CD8-positive, alpha-beta T cell (primary cell): ENCODE measurements at regions of chr16 and their contacts with region 1.

Region 1: DNA sequence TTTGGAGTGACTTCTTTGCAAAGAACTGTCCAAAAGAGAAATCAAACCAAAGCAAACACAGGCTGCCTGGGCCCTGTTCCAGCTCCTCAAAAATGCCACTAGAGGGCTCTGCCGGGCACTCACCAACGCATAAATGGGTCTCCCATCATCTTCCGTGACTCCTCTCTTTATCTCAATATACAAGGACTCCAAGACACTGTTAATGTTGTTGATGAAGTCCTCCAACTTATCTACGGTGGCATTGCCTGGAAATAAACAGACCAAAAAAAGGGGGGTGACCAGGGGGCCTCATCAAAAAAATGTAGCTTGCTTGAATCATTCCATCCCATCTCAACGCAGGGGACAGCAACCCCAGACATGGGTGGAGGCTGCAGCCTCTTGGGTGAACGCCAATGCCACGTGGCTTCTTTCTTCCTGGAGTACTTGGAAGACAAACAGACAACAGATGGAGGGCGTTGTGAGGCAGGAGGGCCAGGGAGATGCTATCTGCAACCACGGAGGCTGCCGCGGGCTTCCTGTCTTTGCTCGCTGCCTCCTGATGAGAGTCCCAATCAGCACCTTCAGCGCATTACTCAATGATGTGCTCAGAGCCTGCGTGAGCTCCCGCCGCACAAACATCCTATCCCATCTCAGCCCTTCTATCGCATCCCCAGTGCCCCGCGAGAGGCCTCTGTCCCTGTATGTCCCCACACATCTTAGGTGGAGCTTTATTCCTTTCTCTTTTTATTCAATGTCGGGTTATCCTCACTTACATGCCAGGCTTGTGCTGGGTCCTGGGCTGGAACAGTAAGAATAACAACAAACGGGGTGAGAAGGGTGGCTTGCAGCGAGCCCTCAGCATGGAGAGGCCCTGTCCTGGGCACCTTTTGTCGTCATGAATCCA is 32.0 kb downstream of the KDM8 start:
- DNase-seq: peak; percentile 78 to 98 (median 93)
- ATAC-seq: peak; percentile 64
- H3K4me3 ChIP-seq: peak overlapping the region; percentile 14 to 30
- H3K4me3 Mint-ChIP-seq: peak overlapping the region; percentile 78
- H3K27ac ChIP-seq: peak overlapping the region; percentile 90 to 97
- H3K27ac Mint-ChIP-seq: peak overlapping the region; percentile 98
- H3K4me1 ChIP-seq: peaks cover 84% of the 10 kb centered on the region
- H3K4me1 Mint-ChIP-seq: peaks cover 92% of the 10 kb centered on the region
- H3K27me3 ChIP-seq: no peaks in the 10 kb centered on the region
- H3K27me3 Mint-ChIP-seq: no peaks in the 10 kb centered on the region
- CTCF ChIP-seq: peak; percentile 76

Region 2: DNA sequence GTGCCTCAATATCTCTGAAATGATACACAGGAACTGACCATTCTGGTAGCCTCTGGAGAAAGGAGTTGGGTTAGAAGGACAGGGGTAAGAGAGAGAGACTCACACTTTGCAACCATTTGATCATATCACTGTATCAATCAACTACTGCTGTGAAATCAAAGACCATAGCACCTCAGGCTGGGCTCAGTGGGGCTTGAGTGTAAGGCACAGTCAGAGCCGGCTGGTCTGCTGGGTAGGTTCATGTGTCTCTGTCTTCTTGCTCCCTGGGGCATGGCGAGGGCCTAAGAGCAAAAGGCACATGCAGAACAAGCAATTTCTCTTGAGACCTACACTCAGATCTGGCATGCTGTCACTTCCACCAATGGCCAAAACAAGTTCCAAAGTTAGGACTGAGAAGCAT is 215.3 kb before region 1 on chr16:
- CTCF ChIA-PET with region 1: no interaction called
- POLR2A ChIA-PET with region 1: no interaction called
- intact Hi-C with region 1: no loop called
- DNase-seq: no peak
- ATAC-seq: no peak
- H3K4me3 ChIP-seq: no peak overlapping the region
- H3K4me3 Mint-ChIP-seq: no peak overlapping the region
- H3K27ac ChIP-seq: no peak overlapping the region
- H3K27ac Mint-ChIP-seq: no peak overlapping the region
- H3K4me1 ChIP-seq: no peaks in the 10 kb centered on the region
- H3K4me1 Mint-ChIP-seq: no peaks in the 10 kb centered on the region
- H3K27me3 ChIP-seq: no peaks in the 10 kb centered on the region
- H3K27me3 Mint-ChIP-seq: peaks cover 15% of the 10 kb centered on the region
- CTCF ChIP-seq: no peak

Region 3: GRCh38 chr16:27097800-27098230 is 137.5 kb before region 1 on chr16:
- CTCF ChIA-PET with region 1: no interaction called
- POLR2A ChIA-PET with region 1: no interaction called
- intact Hi-C with region 1: no loop called
- DNase-seq: no peak
- ATAC-seq: no peak
- H3K4me3 ChIP-seq: no peak overlapping the region
- H3K4me3 Mint-ChIP-seq: no peak overlapping the region
- H3K27ac ChIP-seq: no peak overlapping the region
- H3K27ac Mint-ChIP-seq: no peak overlapping the region
- H3K4me1 ChIP-seq: no peaks in the 10 kb centered on the region
- H3K4me1 Mint-ChIP-seq: no peaks in the 10 kb centered on the region
- H3K27me3 ChIP-seq: no peaks in the 10 kb centered on the region
- H3K27me3 Mint-ChIP-seq: peaks cover 26% of the 10 kb centered on the region
- CTCF ChIP-seq: no peak

Region 4: GRCh38 chr16:27179500-27180072 is 55.7 kb before region 1 on chr16:
- CTCF ChIA-PET with region 1: interaction called, 64 read pairs
- POLR2A ChIA-PET with region 1: interaction called, 12 read pairs
- intact Hi-C with region 1: loop called (anchors 1 to 2 kb)
- DNase-seq: peak; percentile 78 to 94 (median 88)
- ATAC-seq: peak; percentile 100
- H3K4me3 ChIP-seq: no peak overlapping the region
- H3K4me3 Mint-ChIP-seq: peak overlapping the region; percentile 9
- H3K27ac ChIP-seq: no peak overlapping the region
- H3K27ac Mint-ChIP-seq: peak overlapping the region; percentile 28
- H3K4me1 ChIP-seq: peaks cover 22% of the 10 kb centered on the region
- H3K4me1 Mint-ChIP-seq: peaks cover 24% of the 10 kb centered on the region
- H3K27me3 ChIP-seq: no peaks in the 10 kb centered on the region
- H3K27me3 Mint-ChIP-seq: no peaks in the 10 kb centered on the region
- CTCF ChIP-seq: peak; percentile 92

Region 5: GRCh38 chr16:27222249-27223225 is 12.8 kb before region 1 on chr16:
- CTCF ChIA-PET with region 1: interaction called, 11 read pairs
- POLR2A ChIA-PET with region 1: interaction called, 6 read pairs
- intact Hi-C with region 1: no loop called
- DNase-seq: no peak
- ATAC-seq: no peak
- H3K4me3 ChIP-seq: no peak overlapping the region
- H3K4me3 Mint-ChIP-seq: no peak overlapping the region
- H3K27ac ChIP-seq: no peak overlapping the region
- H3K27ac Mint-ChIP-seq: peak overlapping the region; percentile 62
- H3K4me1 ChIP-seq: peaks cover 9% of the 10 kb centered on the region
- H3K4me1 Mint-ChIP-seq: peaks cover 16% of the 10 kb centered on the region
- H3K27me3 ChIP-seq: no peaks in the 10 kb centered on the region
- H3K27me3 Mint-ChIP-seq: no peaks in the 10 kb centered on the region
- CTCF ChIP-seq: no peak

Region 6: GRCh38 chr16:27313422-27314160 is 78.3 kb after region 1 on chr16 and contains the start of gene IL4R:
- CTCF ChIA-PET with region 1: interaction called, 57 read pairs
- POLR2A ChIA-PET with region 1: interaction called, 16 read pairs
- intact Hi-C with region 1: loop called (anchors 1 to 2 kb)
- DNase-seq: peak; percentile 19 to 84 (median 64)
- ATAC-seq: peak; percentile 51
- H3K4me3 ChIP-seq: peak within 1 kb of the TSS; percentile 88 to 90
- H3K4me3 Mint-ChIP-seq: peak within 1 kb of the TSS; percentile 94
- H3K27ac ChIP-seq: peak within 1 kb of the TSS; percentile 83 to 87
- H3K27ac Mint-ChIP-seq: peak within 1 kb of the TSS; percentile 98
- H3K4me1 ChIP-seq: peaks cover 43% of the 10 kb centered on the region
- H3K4me1 Mint-ChIP-seq: peaks cover 47% of the 10 kb centered on the region
- H3K27me3 ChIP-seq: no peaks in the 10 kb centered on the region
- H3K27me3 Mint-ChIP-seq: no peaks in the 10 kb centered on the region
- CTCF ChIP-seq: no peak
- total RNA-seq, gene IL4R: 224 to 240 TPM

Region 7: DNA sequence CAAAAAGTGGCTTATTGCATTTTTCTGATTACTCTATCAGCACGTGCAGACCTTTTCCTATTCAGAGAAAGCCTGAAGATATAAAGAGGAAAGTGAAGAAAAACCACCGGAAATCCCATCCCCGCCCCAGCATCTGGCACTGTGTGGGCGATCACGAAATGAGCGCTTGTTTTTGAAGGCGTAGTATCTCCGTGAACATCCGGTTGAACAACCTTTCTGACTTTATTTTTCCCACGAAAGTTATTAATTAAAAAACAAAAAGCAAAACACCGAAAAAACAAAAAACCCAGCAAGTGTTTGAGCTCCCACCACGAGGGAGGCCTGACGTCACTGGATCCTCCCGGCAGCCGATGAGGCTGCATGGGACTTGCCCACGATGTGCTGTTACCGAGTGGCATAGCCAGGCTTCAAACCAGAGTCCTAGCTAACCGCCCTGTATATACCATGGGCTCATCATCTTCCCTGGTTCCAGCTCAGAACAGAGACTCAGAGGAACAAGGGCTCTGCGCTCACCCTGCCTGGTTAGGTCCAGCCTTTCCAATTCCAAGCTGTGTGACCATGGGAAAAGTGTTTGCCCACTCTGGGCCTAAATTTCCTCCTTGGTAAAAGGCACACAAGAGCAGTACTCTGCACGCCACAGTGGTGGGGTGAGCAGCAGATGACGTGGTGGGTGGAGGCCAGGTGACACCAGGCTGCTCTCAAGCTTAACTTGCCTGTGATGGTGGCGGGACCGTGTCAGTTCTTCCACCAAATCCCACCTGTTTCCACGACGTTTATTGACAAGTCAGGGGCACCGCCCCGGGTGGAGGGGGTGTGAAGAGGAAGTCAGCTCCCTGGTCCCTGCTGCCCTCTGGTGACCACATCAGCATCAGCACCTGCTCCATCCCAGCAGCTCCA is 132.4 kb after region 1 on chr16:
- CTCF ChIA-PET with region 1: interaction called, 69 read pairs
- POLR2A ChIA-PET with region 1: interaction called, 68 read pairs
- intact Hi-C with region 1: loop called (anchors 1 kb)
- DNase-seq: peak; percentile 70 to 98 (median 84)
- ATAC-seq: peak; percentile 81
- H3K4me3 ChIP-seq: peak overlapping the region; percentile 1 to 11
- H3K4me3 Mint-ChIP-seq: peak overlapping the region; percentile 26
- H3K27ac ChIP-seq: peak overlapping the region; percentile 93 to 97
- H3K27ac Mint-ChIP-seq: peak overlapping the region; percentile 99
- H3K4me1 ChIP-seq: peaks cover 58% of the 10 kb centered on the region
- H3K4me1 Mint-ChIP-seq: peaks cover 69% of the 10 kb centered on the region
- H3K27me3 ChIP-seq: no peaks in the 10 kb centered on the region
- H3K27me3 Mint-ChIP-seq: no peaks in the 10 kb centered on the region
- CTCF ChIP-seq: peak; percentile 73

Region 8: DNA sequence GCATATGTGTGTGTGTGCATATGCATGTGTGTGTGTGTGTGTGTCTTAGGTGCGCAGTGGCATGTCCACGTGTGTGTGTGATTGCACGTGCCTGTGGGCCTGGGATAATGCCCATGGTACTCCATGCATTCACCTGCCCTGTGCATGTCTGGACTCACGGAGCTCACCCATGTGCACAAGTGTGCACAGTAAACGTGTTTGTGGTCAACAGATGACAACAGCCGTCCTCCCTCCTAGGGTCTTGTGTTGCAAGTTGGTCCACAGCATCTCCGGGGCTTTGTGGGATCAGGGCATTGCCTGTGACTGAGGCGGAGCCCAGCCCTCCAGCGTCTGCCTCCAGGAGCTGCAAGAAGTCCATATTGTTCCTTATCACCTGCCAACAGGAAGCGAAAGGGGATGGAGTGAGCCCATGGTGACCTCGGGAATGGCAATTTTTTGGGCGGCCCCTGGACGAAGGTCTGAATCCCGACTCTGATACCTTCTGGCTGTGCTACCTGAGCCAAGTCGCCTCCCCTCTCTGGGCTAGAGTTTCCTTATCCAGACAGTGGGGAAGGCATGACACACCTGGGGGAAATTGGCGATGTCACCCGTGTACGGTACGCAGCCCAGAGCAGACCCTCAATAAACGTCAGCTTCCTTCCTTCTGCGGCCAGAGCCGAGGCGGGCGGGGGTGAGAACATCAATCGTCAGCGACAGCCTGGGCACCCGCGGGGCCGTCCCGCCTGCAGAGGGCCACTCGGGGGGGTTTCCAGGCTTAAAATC is 214.3 kb after region 1 on chr16:
- CTCF ChIA-PET with region 1: interaction called, 16 read pairs
- POLR2A ChIA-PET with region 1: interaction called, 12 read pairs
- intact Hi-C with region 1: loop called (anchors 1 kb)
- DNase-seq: peak; percentile 63 to 97 (median 80)
- ATAC-seq: peak; percentile 60
- H3K4me3 ChIP-seq: peak overlapping the region; percentile 17 to 26
- H3K4me3 Mint-ChIP-seq: peak overlapping the region; percentile 70
- H3K27ac ChIP-seq: peak overlapping the region; percentile 60 to 91
- H3K27ac Mint-ChIP-seq: peak overlapping the region; percentile 99
- H3K4me1 ChIP-seq: peaks cover 68% of the 10 kb centered on the region
- H3K4me1 Mint-ChIP-seq: peaks cover 87% of the 10 kb centered on the region
- H3K27me3 ChIP-seq: no peaks in the 10 kb centered on the region
- H3K27me3 Mint-ChIP-seq: no peaks in the 10 kb centered on the region
- CTCF ChIP-seq: no peak